ENCODE measurements at regions of chr5 and their contacts with region 1.

Region 1: DNA sequence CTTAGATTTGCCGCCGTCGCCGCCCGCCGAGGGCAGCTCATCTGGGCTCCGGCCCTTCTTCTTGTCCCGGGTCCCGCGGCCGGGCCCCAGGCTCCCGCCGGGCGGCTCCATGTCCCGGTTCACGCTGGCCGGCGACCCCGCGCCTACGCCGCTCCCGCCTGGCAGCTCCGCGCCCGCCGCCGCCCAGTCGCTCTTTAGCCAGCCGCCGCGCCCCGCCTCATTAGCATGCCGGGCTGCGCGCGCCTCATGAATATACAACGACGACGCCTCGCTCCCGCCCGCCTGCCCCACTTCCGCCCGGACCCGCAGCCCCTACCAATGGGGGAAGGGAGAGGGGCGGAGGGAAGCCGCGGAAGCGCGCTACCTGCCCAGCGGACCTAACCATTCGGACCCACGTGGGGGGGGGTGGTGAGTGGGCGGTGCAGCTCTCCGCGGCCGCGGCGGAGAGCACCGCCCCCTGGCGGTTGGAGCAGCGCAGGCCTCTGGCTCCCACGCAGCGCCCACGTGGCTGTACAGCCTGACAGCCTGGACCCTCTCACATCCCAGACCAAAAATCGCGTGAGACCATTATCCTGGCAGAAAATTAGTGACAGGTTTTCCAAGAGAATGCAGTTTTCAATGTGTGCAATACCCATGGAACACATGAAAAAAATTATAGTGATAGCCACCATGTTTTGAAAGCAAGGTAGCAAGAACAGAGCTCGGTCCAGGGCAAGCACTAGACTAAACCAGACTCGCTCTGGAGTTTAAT is at the start of gene DIAPH1:
- DNase-seq: peak; percentile 68
- H3K4me3 ChIP-seq: peak within 1 kb of the TSS; percentile 83
- H3K27me3 ChIP-seq: no peaks in the 10 kb centered on the region
- CTCF ChIP-seq: peak; percentile 97
- polyA plus RNA-seq, gene DIAPH1: 23.3 and 36.6 TPM in 2 replicates

Region 2: GRCh38 chr5:141590127-141590526 is 28.9 kb before region 1 on chr5:
- CTCF ChIA-PET with region 1: interaction called, 270 read pairs
- POLR2A ChIA-PET with region 1: interaction called, 20 read pairs
- DNase-seq: no peak
- H3K4me3 ChIP-seq: no peak overlapping the region
- H3K27me3 ChIP-seq: no peaks in the 10 kb centered on the region
- CTCF ChIP-seq: no peak

Region 3: GRCh38 chr5:141605523-141606277 is 13.3 kb before region 1 on chr5:
- CTCF ChIA-PET with region 1: interaction called, 81 read pairs
- POLR2A ChIA-PET with region 1: no interaction called
- DNase-seq: no peak
- H3K4me3 ChIP-seq: no peak overlapping the region
- H3K27me3 ChIP-seq: no peaks in the 10 kb centered on the region
- CTCF ChIP-seq: no peak

Region 4: DNA sequence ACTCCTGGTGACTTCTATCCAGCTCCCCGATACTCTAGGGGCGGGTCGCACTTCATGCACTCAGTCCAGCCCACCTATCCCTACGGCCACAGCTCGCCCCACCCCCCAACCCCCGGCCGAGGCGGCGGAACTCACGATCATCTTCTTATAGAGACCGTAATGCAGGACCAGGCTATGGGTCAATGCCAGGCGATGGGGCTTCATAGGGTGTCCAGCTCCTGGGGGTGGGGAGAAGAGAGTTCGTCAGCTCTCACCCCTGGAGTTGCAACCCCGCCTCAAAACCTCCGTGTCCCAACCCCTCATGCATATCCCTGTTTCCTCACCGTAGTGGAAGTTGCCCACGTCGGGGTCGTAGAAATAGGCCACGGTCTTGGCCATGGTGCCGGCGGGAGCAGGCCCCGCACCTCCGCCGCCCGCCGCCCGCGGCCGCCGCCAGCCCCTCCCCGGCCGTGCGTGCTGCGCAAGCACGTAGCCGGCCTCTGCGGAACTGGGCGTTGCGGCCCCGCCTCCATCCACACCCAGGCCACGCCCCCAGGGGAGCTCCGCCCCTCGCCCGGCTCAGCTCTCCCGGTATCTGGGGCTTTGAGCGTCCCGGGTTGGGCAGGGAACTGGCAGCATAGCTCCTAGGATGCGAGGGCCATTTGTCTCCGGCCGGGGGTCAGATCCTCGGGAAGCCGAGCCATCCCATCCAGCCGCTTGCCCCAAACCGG is 17.6 kb after region 1 on chr5 and contains the starts of genes HDAC3 and RELL2:
- CTCF ChIA-PET with region 1: interaction called, 107 read pairs
- POLR2A ChIA-PET with region 1: no interaction called
- DNase-seq: peak; percentile 59
- H3K4me3 ChIP-seq: peak within 1 kb of the TSS; percentile 92
- H3K27me3 ChIP-seq: no peaks in the 10 kb centered on the region
- CTCF ChIP-seq: no peak
- polyA plus RNA-seq, gene HDAC3: 84.2 and 97.8 TPM in 2 replicates
- polyA plus RNA-seq, gene RELL2: 3.7 and 5.0 TPM in 2 replicates

Region 5: GRCh38 chr5:141641634-141642267 is 22.8 kb after region 1 on chr5:
- CTCF ChIA-PET with region 1: interaction called, 107 read pairs
- POLR2A ChIA-PET with region 1: no interaction called
- DNase-seq: no peak
- H3K4me3 ChIP-seq: no peak overlapping the region
- H3K27me3 ChIP-seq: no peaks in the 10 kb centered on the region
- CTCF ChIP-seq: peak; percentile 44

Region 6: DNA sequence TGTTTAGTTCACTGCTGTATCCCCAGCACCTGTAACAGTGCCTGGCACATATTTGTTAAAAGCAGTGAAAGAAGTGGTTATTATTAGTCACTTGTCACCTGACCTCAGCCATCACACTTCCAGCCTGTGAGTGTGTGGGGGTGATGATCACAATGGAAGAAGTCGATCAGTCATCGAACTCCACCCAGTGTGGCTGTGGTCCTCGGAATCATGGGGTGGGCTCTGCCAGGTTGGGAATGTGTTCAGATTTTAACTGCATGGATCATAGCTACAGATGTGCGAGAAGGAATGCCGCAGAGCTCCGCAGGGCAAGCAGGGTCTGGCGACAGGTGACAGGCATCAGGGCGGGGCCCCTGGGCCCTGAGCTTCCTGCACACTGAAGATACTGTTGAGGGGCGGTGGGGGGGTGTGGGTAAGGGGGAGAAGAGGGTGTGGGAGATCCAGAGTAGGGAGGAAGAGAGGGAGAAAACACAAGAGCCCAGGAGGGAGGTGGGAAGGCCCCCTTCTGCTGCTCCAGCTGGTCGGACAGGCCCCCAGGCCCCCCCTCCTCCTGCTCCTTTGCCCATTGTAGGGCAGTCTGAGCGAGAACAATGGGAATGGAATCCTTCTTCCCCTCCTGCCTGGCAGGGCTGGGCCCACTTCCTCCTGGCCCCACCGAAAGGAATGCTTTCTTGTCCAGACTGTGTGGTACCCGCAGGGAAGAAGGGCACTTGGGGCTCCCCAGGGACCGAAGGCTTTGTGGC is 616.2 kb after region 1 on chr5:
- CTCF ChIA-PET with region 1: no interaction called
- POLR2A ChIA-PET with region 1: interaction called, 11 read pairs
- DNase-seq: no peak
- H3K4me3 ChIP-seq: no peak overlapping the region
- H3K27me3 ChIP-seq: 0 out of 2 replicates have a peak, but pooled peaks cover 2% of the 10 kb centered on the region
- CTCF ChIP-seq: no peak

Measured in BJ (cell line).